Activated CD4-positive, alpha-beta memory T cell treated with anti-CD3 and anti-CD28 coated beads for 36 hours (primary cell): ENCODE measurements at regions of chr20 and their contacts with region 1.

Region 1: DNA sequence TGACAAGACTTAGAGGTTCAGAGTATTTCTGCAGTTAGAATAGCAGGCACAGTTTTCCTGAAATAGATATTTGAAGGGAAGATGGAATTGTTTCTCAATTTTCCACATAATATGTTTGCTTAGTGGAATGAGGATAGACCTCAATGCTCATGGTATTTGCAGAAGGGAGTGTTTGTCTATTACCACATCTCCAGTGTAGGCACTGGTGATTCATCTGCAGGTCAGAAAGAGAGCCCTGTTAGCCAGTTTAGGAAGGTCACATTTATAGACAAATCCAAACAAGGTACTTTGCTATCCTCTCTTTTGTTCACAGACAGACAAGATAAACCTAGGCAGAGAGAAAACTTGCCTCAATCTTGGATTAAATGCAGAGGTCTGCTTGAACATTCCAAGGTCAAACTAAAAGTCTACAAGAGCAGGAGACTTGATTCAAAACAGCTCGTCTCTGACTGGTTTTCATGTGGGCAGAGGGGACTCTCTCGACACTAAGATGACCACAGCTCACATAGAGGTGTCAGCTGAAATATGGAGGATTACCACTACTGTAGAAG is 22.8 kb downstream of the ISM1 start:
- DNase-seq: no peak
- H3K4me3 Mint-ChIP-seq: no peak overlapping the region
- H3K27ac Mint-ChIP-seq: no peak overlapping the region
- H3K4me1 Mint-ChIP-seq: peaks cover 35% of the 10 kb centered on the region
- H3K27me3 Mint-ChIP-seq: no peaks in the 10 kb centered on the region

Region 2: GRCh38 chr20:13009682-13010406 is 234.1 kb before region 1 on chr20:
- CTCF ChIA-PET with region 1: no interaction called
- POLR2A ChIA-PET with region 1: no interaction called
- intact Hi-C with region 1: loop called (anchors 1 kb)
- DNase-seq: no peak
- H3K4me3 Mint-ChIP-seq: peak overlapping the region; percentile 42
- H3K27ac Mint-ChIP-seq: no peak overlapping the region
- H3K4me1 Mint-ChIP-seq: peaks cover 15% of the 10 kb centered on the region
- H3K27me3 Mint-ChIP-seq: no peaks in the 10 kb centered on the region

Region 3: DNA sequence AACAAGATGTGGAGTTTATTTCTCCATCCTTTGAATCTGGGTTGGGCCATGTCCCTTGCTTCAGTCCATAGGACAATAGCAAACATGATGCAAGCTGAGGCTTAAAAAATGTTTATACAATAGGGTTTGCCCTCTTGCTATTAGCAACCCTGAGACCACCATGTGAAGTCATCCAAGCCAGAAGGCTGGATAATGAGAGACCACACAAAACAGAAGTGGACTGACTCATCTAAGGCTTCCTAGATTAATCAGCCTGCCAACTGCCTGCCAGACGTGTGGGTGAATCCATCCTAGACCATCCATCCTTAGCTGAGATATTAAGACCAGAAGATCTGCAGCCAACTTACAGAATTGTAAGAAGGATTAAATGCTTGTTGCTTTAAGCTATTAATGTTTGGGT is 60.9 kb before region 1 on chr20:
- CTCF ChIA-PET with region 1: no interaction called
- POLR2A ChIA-PET with region 1: no interaction called
- intact Hi-C with region 1: loop called (anchors 1 kb)
- DNase-seq: peak; percentile 29
- H3K4me3 Mint-ChIP-seq: no peak overlapping the region
- H3K27ac Mint-ChIP-seq: no peak overlapping the region
- H3K4me1 Mint-ChIP-seq: no peaks in the 10 kb centered on the region
- H3K27me3 Mint-ChIP-seq: peaks cover 3% of the 10 kb centered on the region

Region 4: DNA sequence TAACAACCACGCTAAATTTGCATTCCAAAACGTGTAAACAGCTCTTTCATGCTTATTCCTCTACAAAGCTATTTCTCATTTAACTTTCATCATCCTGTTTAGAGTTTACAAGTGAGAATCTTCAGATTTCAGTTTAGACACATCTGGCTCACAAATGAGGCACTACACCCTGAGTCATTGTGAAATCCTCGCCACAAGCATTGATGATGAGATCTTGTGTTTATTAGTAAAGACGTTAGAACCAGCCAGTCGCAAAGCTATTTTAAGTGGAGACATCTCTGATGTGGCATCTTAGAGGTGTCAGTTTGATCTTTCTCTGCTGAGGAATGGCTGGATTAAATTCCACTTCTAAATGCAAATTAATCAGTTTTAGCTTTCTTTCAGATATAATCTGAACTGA is 31.2 kb before region 1 on chr20:
- CTCF ChIA-PET with region 1: no interaction called
- POLR2A ChIA-PET with region 1: interaction called, 5 read pairs
- intact Hi-C with region 1: loop called (anchors 1 kb)
- DNase-seq: peak; percentile 31
- H3K4me3 Mint-ChIP-seq: no peak overlapping the region
- H3K27ac Mint-ChIP-seq: no peak overlapping the region
- H3K4me1 Mint-ChIP-seq: peaks cover 3% of the 10 kb centered on the region
- H3K27me3 Mint-ChIP-seq: peaks cover 27% of the 10 kb centered on the region

Region 5: GRCh38 chr20:13221673-13222318 is 22.1 kb before region 1 on chr20:
- CTCF ChIA-PET with region 1: no interaction called
- POLR2A ChIA-PET with region 1: no interaction called
- intact Hi-C with region 1: loop called (anchors 2 kb)
- DNase-seq: peak; percentile 76
- H3K4me3 Mint-ChIP-seq: peak overlapping the region; percentile 69
- H3K27ac Mint-ChIP-seq: no peak overlapping the region
- H3K4me1 Mint-ChIP-seq: peaks cover 15% of the 10 kb centered on the region
- H3K27me3 Mint-ChIP-seq: peaks cover 38% of the 10 kb centered on the region

Region 6: DNA sequence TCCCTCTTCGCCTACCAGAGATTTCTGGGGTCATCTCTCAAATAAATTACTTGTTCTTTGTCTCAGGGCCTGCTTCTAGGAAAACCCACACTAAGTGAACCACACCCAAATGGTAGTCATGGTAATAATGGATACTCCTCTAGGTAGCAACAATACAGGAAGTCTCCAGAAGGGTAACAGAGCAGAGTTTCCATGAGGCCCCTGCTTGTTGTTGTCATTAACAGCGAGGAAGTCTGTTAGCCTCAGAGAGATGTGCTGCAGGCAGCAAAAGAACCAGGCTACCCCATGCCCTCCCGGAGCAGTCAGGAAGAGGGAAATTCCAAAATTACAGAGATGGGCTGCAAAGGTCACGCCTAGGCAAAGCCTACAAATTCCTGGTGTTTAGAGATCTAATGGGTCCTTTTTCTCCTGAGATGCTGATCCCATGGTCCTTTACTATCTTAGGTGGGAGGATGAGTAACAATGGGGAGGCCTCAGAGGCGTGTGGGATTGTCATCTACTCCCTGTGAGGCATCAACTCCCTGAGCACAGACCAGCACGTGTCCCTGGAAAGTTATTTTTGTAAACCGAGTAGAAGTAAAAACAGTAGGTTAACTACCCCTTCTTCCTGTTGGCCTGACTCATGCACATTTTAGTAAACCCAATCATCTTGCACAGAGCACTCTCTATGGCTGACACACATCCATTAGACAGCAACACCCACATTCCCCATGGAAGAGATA is 12.7 kb before region 1 on chr20:
- CTCF ChIA-PET with region 1: no interaction called
- POLR2A ChIA-PET with region 1: interaction called, 6 read pairs
- intact Hi-C with region 1: loop called (anchors 1 kb)
- DNase-seq: peak; percentile 57
- H3K4me3 Mint-ChIP-seq: no peak overlapping the region
- H3K27ac Mint-ChIP-seq: peak overlapping the region; percentile 40
- H3K4me1 Mint-ChIP-seq: peaks cover 42% of the 10 kb centered on the region
- H3K27me3 Mint-ChIP-seq: no peaks in the 10 kb centered on the region

Region 7: DNA sequence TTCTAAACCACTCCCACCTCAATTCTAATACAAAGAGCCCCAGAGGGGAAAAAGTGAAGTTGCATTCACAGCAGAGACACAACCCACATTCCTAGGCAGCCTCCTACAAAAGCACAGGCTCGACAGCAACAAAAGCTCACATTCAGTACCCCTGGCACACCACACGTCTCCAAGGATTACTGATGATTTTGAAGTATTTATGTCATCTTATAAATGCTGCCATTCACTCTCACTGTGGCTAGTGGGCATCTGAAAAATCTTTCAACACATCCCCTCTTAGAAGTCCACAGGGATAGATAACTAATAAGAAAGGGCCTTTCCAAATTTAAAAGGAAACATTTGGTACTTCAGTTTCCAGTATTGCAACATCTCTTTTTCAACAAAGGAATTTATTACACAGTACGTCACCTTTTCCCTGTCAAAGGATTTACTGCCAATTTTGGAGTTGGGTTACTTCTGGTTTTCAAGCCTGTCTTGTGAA is 248.1 kb after region 1 on chr20:
- CTCF ChIA-PET with region 1: no interaction called
- POLR2A ChIA-PET with region 1: no interaction called
- intact Hi-C with region 1: no loop called
- DNase-seq: no peak
- H3K4me3 Mint-ChIP-seq: no peak overlapping the region
- H3K27ac Mint-ChIP-seq: no peak overlapping the region
- H3K4me1 Mint-ChIP-seq: no peaks in the 10 kb centered on the region
- H3K27me3 Mint-ChIP-seq: no peaks in the 10 kb centered on the region

Region 8: DNA sequence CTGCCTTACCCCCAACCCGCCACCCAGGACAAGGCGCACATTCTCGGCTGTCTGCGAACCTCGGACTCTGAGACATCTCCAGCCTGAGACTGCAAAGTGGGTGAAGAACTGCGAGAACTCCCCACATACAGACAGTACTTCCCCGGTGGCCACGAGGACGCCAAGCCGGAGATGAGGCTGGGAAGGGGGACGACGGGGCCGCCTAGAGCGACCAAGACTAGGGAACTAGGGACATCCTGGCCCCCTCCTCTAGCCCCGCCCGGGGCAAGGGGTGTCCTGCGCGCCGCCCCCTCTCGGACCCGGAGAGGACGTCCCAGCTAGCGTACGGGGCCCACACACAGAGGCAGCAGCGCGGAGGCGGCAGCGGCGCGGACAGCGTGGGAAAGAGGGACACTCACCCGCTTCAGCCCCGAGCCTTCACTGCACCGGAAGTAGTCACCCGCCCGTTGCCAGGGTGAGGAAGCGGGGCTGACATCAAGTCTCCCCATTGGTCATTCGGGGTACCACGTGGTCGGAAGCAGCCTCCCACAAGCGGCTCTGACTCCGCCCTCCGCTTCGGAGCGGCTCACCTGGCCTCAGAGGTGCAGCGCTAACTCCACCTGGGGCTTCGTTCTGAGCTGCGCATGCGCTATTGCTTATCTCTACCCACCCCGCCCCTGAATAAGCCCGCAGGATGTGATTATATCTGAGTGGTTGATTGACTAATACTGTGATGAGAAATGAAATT is 394.8 kb after region 1 on chr20 and contains the start of gene TASP1:
- CTCF ChIA-PET with region 1: no interaction called
- POLR2A ChIA-PET with region 1: no interaction called
- intact Hi-C with region 1: loop called (anchors 1 kb)
- DNase-seq: peak; percentile 98
- H3K4me3 Mint-ChIP-seq: peak within 1 kb of the TSS; percentile 87
- H3K27ac Mint-ChIP-seq: peak within 1 kb of the TSS; percentile 80
- H3K4me1 Mint-ChIP-seq: peaks cover 19% of the 10 kb centered on the region
- H3K27me3 Mint-ChIP-seq: peaks cover 6% of the 10 kb centered on the region
- total RNA-seq, gene TASP1: 8.2 to 8.9 TPM

Region 9: GRCh38 chr20:13877793-13878192 is 633.9 kb after region 1 on chr20:
- CTCF ChIA-PET with region 1: no interaction called
- POLR2A ChIA-PET with region 1: no interaction called
- intact Hi-C with region 1: no loop called
- DNase-seq: no peak
- H3K4me3 Mint-ChIP-seq: no peak overlapping the region
- H3K27ac Mint-ChIP-seq: no peak overlapping the region
- H3K4me1 Mint-ChIP-seq: no peaks in the 10 kb centered on the region
- H3K27me3 Mint-ChIP-seq: peaks cover 2% of the 10 kb centered on the region